Mammary epithelial cell (primary cell): ENCODE measurements at regions of chr4 and their contacts with region 1.

Region 1: GRCh38 chr4:122922877-122923511 is 597 bp upstream of the NUDT6 start:
- DNase-seq: peak; percentile 81
- H3K4me3 ChIP-seq: peak overlapping the region; percentile 72 to 99 (median 85)
- H3K27ac ChIP-seq: peak overlapping the region; percentile 61
- H3K4me1 ChIP-seq: peaks cover 8% of the 10 kb centered on the region
- H3K27me3 ChIP-seq: no peaks in the 10 kb centered on the region
- CTCF ChIP-seq: no peak

Region 2: GRCh38 chr4:122617597-122618593 is 305.1 kb before region 1 on chr4:
- CTCF ChIA-PET with region 1: no interaction called
- dilution Hi-C with region 1: loop called (anchors 25 kb)
- in situ Hi-C with region 1: loop called in 1 of 2 experiments (anchors 10 kb)
- intact Hi-C with region 1: no loop called
- DNase-seq: no peak
- H3K4me3 ChIP-seq: no peak overlapping the region
- H3K27ac ChIP-seq: no peak overlapping the region
- H3K4me1 ChIP-seq: no peaks in the 10 kb centered on the region
- H3K27me3 ChIP-seq: no peaks in the 10 kb centered on the region
- CTCF ChIP-seq: no peak

Region 3: GRCh38 chr4:122666527-122667245 is 256.3 kb before region 1 on chr4:
- CTCF ChIA-PET with region 1: no interaction called
- dilution Hi-C with region 1: no loop called
- in situ Hi-C with region 1: no loop called
- intact Hi-C with region 1: no loop called
- DNase-seq: peak; percentile 85
- H3K4me3 ChIP-seq: peak overlapping the region in 1 of 3 experiments; percentile 12
- H3K27ac ChIP-seq: peak overlapping the region; percentile 81
- H3K4me1 ChIP-seq: peaks cover 49% of the 10 kb centered on the region
- H3K27me3 ChIP-seq: no peaks in the 10 kb centered on the region
- CTCF ChIP-seq: no peak

Region 4: GRCh38 chr4:122687531-122688061 is 235.4 kb before region 1 on chr4:
- CTCF ChIA-PET with region 1: no interaction called
- dilution Hi-C with region 1: no loop called
- in situ Hi-C with region 1: no loop called
- intact Hi-C with region 1: no loop called
- DNase-seq: no peak
- H3K4me3 ChIP-seq: no peak overlapping the region
- H3K27ac ChIP-seq: no peak overlapping the region
- H3K4me1 ChIP-seq: no peaks in the 10 kb centered on the region
- H3K27me3 ChIP-seq: no peaks in the 10 kb centered on the region
- CTCF ChIP-seq: no peak

Region 5: DNA sequence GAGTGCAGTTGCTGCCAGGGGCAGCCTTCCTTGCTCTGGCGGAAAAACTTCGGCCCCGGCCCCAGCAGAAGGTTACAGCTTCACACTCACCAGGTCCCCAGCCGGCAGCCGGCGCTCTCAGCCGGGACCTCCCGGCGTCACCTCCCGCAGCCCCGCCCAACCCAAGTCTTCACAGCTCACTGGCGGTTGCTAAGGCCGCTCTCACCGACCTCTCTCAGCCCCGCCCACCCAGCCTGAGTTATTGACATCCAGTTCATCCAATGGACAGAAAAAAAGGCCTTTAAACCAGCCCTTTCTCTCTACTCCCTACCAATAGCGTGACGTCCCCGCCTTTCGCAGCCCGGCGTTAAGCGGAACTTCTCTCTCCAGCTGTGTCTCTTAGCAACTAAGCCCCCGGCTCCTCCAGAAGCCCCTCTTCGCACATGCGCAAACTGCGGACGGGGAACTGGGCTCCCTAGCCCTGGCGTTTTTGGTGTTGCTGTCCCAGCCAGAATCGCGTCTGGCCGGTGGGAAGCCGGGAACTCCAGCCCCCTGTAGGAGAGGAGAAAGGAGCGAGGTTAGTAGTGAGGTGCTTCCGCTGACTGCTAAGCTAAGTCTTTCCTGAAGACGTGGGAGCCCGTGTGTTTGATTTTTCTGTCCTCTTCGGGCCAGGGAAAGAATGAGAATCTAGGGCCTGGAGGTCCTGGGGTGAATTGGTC is 190.5 kb before region 1 on chr4 and contains the start of gene BBS12:
- CTCF ChIA-PET with region 1: no interaction called
- dilution Hi-C with region 1: no loop called
- in situ Hi-C with region 1: no loop called
- intact Hi-C with region 1: loop called (anchors 1 kb)
- DNase-seq: peak; percentile 99
- H3K4me3 ChIP-seq: peak within 1 kb of the TSS; percentile 58 to 76 (median 70)
- H3K27ac ChIP-seq: peak within 1 kb of the TSS; percentile 92
- H3K4me1 ChIP-seq: peaks cover 7% of the 10 kb centered on the region
- H3K27me3 ChIP-seq: no peaks in the 10 kb centered on the region
- CTCF ChIP-seq: peak in 1 of 2 donors; percentile 62
- total RNA-seq, gene BBS12: 4.3 to 13.0 TPM